Posterior vena cava (tissue), 2 donors: ENCODE measurements at regions of chr10 and their contacts with region 1.

Region 1: GRCh38 chr10:17905491-17905890 is 46.2 kb upstream of the SLC39A12 start:
- DNase-seq: no peak

Region 2: GRCh38 chr10:18104223-18104872 is 198.9 kb after region 1 on chr10:
- intact Hi-C with region 1: loop called in 1 of 2 experiments (anchors 10 kb)
- DNase-seq: peak; percentile 82

Region 3: DNA sequence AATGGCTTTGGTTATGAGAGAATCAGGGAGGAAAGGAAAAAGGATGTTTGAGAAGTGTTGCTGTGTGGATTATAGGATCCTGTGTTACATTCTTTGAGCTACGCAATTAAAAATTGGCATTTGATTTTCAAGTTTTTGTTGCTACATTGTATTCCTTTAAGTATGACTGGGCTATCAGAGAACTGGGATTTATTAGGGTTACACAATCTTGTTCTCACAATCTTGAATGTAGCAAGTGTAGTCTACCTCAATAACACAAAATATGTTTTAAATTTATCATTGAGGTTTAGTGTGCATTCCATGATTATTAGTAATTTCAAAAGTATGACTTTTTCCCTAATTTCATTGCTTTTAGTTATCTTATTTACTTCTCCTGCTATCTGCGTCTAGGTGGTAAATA is 348.6 kb after region 1 on chr10:
- intact Hi-C with region 1: no loop called
- DNase-seq: no peak